Psoas muscle (tissue), 8 donors: ENCODE measurements at regions of chr10 and their contacts with region 1.

Region 1: DNA sequence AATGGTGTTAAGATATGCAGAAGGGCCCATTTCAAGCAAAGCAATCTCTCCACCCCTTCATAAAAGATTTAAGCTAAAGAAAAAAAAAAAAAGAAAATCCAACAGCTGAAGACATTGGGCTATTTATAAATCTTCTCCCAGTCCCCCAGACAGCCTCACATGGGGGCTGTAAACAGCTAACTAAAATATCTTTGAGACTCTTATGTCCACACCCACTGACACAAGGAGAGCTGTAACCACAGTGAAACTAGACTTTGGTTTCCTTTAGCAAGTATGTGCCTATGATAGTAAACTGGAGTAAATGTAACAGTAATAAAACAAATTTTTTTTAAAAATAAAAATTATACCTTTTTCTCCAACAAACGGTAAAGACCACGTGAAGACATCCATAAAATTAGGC is 28.6 kb downstream of the PPP3CB start:
- DNase-seq: no peak
- ATAC-seq: peak in 3 of 4 donors; percentile 34 to 68 (median 50)
- H3K4me3 ChIP-seq: peak overlapping the region; percentile 61
- H3K27ac ChIP-seq: peak overlapping the region; percentile 84
- H3K4me1 ChIP-seq: peaks cover 64% of the 10 kb centered on the region
- H3K27me3 ChIP-seq: no peaks in the 10 kb centered on the region
- CTCF ChIP-seq: no peak

Region 2: GRCh38 chr10:73424516-73424915 is 42.7 kb before region 1 on chr10:
- intact Hi-C with region 1: loop called in 1 of 2 experiments (anchors 5 kb)
- DNase-seq: no peak
- ATAC-seq: peak in 1 of 4 donors; percentile 46
- H3K4me3 ChIP-seq: no peak overlapping the region
- H3K27ac ChIP-seq: no peak overlapping the region
- H3K4me1 ChIP-seq: peaks cover 16% of the 10 kb centered on the region
- H3K27me3 ChIP-seq: no peaks in the 10 kb centered on the region
- CTCF ChIP-seq: no peak

Region 3: DNA sequence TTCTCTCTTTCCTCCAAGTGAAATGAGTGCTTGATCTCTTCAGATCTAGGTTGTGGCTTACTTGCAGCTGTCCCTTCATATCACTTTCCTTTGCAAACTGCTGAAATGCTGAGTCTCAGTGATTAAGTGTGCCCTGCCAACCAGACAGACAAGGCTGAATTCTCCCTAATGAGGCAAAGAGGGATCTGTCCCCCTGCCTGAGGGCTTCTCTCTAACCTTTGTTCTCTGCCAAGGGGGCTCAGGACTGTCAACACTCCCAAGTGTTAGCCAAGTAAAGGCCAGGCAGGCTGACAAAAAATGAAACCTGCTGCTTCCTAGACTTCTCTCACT is 33.7 kb before region 1 on chr10 and contains the start of gene MSS51:
- intact Hi-C with region 1: loop called in 1 of 2 experiments (anchors 5 kb)
- DNase-seq: peak in 1 of 2 donors; percentile 29
- ATAC-seq: peak; percentile 91 to 96 (median 94)
- H3K4me3 ChIP-seq: peak within 1 kb of the TSS; percentile 70
- H3K27ac ChIP-seq: peak within 1 kb of the TSS; percentile 78
- H3K4me1 ChIP-seq: peaks cover 27% of the 10 kb centered on the region
- H3K27me3 ChIP-seq: no peaks in the 10 kb centered on the region
- CTCF ChIP-seq: no peak
- total RNA-seq, gene MSS51: 17.0 to 253 (median 80.5) TPM

Region 4: GRCh38 chr10:73446952-73447351 is 20.3 kb before region 1 on chr10:
- intact Hi-C with region 1: loop called in 1 of 2 experiments (anchors 2 kb)
- DNase-seq: no peak
- ATAC-seq: no peak
- H3K4me3 ChIP-seq: no peak overlapping the region
- H3K27ac ChIP-seq: no peak overlapping the region
- H3K4me1 ChIP-seq: peaks cover 21% of the 10 kb centered on the region
- H3K27me3 ChIP-seq: no peaks in the 10 kb centered on the region
- CTCF ChIP-seq: no peak